ENCODE measurements at regions of chr3 and their contacts with region 1.

Region 1: GRCh38 chr3:49093853-49094767 is at the start of gene QRICH1:
- DNase-seq: peak; percentile 94

Region 2: GRCh38 chr3:49021813-49022687 is 72.1 kb before region 1 on chr3 and contains the start of gene NDUFAF3:
- CTCF ChIA-PET with region 1: interaction called, 7 read pairs
- POLR2A ChIA-PET with region 1: interaction called, 49 read pairs
- DNase-seq: peak; percentile 85

Region 3: DNA sequence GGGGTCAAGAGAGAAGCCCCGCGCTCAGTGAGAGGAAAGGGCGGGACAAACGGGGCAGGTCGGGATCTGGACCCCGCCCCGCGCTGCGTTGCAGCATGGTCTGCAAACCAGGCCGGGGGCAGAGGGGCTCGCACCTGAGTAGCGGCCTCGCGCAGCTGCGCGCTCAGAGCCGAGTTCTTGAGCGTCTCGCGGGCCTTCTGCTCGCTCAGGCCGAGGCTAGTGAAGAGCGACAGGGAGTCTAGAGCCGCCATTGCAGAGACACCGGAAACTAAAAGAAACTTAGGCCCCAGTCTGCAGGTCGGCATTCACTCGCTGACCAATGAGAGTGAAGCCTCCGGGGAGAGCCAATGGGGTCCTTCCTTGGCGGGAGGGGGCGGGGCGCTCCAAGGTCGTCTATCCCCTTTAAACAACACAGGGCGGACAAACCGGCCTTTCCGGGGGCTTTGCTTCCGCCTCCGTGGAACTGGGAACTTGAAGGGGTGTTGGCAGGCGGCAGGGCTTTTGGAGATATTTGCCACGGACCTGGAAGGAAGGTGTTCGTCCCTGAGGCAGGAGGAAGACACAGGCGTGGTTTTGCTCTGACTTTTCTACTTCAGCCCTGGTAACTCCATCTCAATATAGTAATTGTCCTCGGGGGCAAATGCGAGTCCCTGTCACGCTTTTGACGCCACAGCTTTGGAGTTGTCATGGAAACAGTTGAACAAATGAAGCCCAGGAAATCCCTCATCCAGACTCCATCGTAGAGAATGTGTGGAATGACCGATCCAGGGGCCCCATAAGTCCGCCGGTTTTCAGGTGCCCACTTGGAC is 10.6 kb after region 1 on chr3 and contains the start of gene QARS1:
- CTCF ChIA-PET with region 1: interaction called, 6 read pairs
- POLR2A ChIA-PET with region 1: interaction called, 44 read pairs
- DNase-seq: peak; percentile 95

Region 4: DNA sequence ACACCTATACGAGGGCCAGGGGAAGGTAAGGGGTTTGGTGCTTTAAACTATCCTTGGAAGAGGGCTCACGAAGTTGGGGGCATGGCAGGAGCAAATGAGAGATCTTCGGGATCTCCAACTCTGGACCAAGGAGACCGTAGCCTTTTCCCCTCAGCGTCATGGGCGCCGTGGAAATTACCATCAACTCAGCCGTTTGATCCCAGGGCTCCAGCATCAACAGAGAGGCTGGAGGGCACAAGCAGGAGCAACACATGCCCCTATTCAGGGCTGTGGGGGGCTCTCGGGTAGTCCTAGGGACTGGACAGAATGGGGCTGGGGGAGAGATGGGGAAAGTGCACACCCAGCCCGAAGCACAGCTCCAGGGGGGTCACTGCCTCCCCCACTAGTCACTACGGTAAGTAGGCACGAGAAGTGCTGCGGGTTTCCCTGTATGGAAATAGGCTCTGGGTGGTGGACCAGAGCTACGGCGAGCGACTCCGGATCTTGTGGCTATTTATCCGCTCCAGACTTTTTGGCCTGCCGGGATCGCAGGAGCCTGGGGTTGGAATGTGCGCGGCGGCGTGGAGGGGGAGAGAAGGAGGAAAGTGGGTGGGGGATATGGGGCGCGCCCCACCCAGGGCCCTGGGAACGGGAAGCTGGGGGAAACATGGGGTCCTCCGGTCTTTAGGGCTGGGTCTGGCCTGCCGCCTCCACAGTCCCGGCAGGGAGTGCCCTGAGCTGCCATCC is 39.3 kb after region 1 on chr3:
- CTCF ChIA-PET with region 1: interaction called, 6 read pairs
- POLR2A ChIA-PET with region 1: interaction called, 32 read pairs
- DNase-seq: peak; percentile 86

Region 5: GRCh38 chr3:49177073-49177472 is 83.0 kb after region 1 on chr3:
- CTCF ChIA-PET with region 1: no interaction called
- POLR2A ChIA-PET with region 1: no interaction called
- DNase-seq: no peak

Region 6: GRCh38 chr3:49217688-49218470 is 123.8 kb after region 1 on chr3:
- CTCF ChIA-PET with region 1: no interaction called
- POLR2A ChIA-PET with region 1: no interaction called
- DNase-seq: no peak

Region 7: GRCh38 chr3:49351521-49352011 is 257.5 kb after region 1 on chr3:
- CTCF ChIA-PET with region 1: no interaction called
- POLR2A ChIA-PET with region 1: no interaction called
- DNase-seq: no peak